Activated T-helper 1 cell treated with anti-CD3 and anti-CD28 coated beads, Interleukin-12 subunit alpha, Interleukin-12 subunit beta, Interleukin-2, Interleukin-4 antibody, amounts not matched to agents 30 ng/mL and 10 ng/mL and 1 ng/mL, durations not matched to agents 14 hours and 24 hours and 36 hours (primary cell): ENCODE measurements at regions of chr2 and their contacts with region 1.

Region 1: DNA sequence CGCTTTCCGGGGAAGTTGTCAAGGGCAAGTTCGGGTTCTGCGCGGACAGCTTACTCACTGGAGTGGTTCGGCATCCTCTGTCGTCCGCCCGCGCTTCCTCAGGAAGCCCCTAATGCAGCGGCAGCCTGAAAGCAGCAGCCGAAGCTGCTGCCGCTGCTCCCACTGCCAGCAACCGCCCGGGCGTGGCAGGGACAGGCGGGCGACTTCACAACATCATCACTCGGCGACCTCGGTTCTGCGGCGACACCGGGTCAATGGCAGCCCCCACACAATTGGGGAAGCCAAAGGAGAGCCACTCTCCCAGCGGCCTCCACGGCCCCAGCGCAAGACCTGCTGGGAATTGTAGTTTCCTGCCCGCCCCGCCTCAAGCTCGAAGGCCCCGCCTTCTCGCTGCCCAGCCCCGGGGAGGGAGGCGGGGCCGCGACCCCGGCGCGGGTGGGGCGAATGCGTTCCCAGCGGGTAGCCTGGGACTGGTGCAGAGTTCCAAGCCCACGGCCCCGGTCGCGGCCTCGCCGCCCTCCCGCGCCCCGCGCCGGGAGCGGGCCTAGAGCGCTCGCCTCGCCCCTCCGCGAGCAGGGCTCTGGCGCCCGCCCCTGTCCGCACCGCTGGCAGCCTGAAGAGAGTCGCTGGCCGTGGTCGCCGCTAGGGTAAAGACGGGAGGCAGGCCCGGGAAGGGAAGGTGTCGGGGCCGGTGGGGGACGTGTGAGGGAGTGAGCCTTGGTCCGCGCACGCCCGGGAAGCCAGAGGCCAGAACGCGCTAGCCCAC is at the starts of genes STRADB and TRAK2:
- DNase-seq: peak; percentile 94
- H3K4me3 Mint-ChIP-seq: peak within 1 kb of the TSS; percentile 94
- H3K27ac Mint-ChIP-seq: peak within 1 kb of the TSS; percentile 93
- H3K4me1 Mint-ChIP-seq: peaks cover 43% of the 10 kb centered on the region
- H3K27me3 Mint-ChIP-seq: peaks cover 12% of the 10 kb centered on the region
- total RNA-seq, gene STRADB: 14.6 and 18.1 TPM in 2 replicates
- total RNA-seq, gene TRAK2: 24.7 and 28.9 TPM in 2 replicates

Region 2: GRCh38 chr2:200888704-200889625 is 562.5 kb before region 1 on chr2 and contains the starts of genes NIF3L1 and PPIL3:
- intact Hi-C with region 1: loop called (anchors 1 kb)
- DNase-seq: peak; percentile 96
- H3K4me3 Mint-ChIP-seq: peak within 1 kb of the TSS; percentile 97
- H3K27ac Mint-ChIP-seq: peak within 1 kb of the TSS; percentile 99
- H3K4me1 Mint-ChIP-seq: peaks cover 54% of the 10 kb centered on the region
- H3K27me3 Mint-ChIP-seq: no peaks in the 10 kb centered on the region
- total RNA-seq, gene NIF3L1: 26.6 and 27.3 TPM in 2 replicates
- total RNA-seq, gene PPIL3: 44.2 TPM in 2 replicates

Region 3: DNA sequence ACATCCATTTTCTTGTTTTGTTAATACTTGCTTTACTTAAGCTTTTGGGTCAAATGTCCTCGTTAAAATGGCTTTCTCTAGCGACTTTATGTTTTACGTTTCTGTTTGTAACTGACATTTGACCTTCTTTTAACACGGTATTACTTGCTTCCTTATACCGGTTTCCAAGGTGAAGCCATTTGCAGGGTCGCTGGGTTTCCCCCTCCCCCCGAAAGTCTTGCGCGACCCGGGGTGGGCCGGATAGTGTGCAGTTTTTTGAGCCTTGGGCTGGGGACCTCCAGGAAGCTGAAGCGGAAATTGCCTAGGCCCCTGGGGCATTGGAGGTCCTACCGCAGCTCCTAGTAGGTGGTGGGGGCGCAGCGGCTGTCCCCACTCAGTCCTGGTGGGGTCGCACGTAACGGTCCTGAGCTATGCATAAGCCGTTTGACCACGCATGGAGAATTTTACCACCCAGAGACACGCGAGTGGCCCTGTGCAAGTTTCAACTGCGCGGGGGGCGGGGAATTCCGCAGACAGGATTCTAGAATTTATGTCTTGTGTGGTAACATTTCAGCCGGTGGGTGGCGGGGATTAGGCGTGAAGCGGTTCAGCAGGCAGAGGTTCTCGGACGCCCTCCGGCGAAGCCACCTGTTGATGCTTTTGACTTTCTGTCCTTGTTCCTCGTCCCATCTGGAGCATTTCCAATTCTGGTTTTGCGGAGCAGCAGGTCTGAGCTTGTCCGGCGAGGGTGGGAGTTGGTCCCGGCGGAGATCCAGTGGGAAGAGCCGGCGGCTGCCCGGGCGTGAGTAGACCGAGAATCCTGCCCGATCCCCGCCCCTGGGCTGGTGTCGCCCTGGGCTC is 333.1 kb before region 1 on chr2:
- intact Hi-C with region 1: loop called (anchors 5 kb)
- DNase-seq: peak; percentile 78
- H3K4me3 Mint-ChIP-seq: peak overlapping the region; percentile 94
- H3K27ac Mint-ChIP-seq: peak overlapping the region; percentile 100
- H3K4me1 Mint-ChIP-seq: peaks cover 65% of the 10 kb centered on the region
- H3K27me3 Mint-ChIP-seq: no peaks in the 10 kb centered on the region

Region 4: DNA sequence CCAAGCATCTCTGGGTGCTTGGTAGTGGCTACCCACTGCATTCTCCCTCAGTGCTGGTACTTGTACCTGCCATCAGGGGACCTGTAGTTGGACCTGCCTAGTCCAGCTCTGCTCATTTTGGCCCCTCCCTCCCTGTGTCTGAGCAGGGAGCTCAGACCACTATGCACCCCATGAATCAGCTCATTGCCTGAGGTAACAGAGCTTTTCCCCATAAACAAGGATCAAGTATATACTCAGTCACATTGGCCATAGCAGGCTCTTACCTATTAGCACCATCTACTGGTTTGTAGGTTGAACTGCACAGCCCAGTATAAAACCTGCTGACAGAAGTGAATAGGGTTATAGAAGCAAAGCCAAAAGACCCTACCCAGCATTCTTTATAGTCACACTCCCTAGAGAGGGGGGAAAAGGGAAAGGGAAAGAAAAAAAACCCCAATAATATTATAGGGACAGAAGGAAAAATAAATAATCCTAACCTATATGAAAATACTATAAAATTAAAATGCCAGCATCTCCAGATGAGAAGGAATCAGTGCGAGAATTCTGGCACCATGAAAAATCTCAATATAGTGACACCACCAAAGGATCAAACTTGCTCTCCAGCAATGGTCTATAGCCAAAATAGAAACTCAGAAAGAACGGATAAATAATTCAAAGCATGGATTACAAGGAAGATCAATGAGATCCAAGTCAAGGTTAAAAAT is 87.5 kb before region 1 on chr2:
- intact Hi-C with region 1: loop called (anchors 2 kb)
- DNase-seq: peak; percentile 30
- H3K4me3 Mint-ChIP-seq: no peak overlapping the region
- H3K27ac Mint-ChIP-seq: no peak overlapping the region
- H3K4me1 Mint-ChIP-seq: peaks cover 45% of the 10 kb centered on the region
- H3K27me3 Mint-ChIP-seq: no peaks in the 10 kb centered on the region

Region 5: DNA sequence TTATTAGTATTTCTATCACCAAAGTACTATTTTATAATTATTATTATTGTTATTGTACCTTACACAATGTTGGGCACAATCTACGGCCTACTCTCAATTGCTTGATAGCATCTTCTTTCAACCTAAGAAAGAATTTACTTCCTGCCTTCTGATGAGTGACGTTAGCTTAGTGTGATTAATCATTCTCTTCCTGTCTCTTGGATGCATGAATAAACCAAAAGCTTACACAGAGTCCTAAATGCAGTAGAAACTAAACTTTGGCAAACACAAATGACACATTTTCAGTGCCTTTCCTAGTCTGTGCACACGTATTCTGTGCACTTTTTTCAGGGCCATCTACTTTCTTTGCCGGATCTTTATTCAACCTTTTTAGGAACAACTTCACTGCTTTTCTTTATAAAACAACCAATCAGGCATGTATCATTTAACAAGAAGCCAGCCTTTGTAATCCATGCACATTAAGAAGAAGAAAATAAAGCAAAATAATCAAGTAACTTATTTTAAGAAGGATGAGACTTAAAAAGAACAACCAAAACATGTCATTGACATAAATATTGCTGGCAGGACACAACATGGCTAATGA is 19.3 kb before region 1 on chr2:
- intact Hi-C with region 1: loop called (anchors 1 kb)
- DNase-seq: no peak
- H3K4me3 Mint-ChIP-seq: peak overlapping the region; percentile 57
- H3K27ac Mint-ChIP-seq: peak overlapping the region; percentile 85
- H3K4me1 Mint-ChIP-seq: peaks cover 35% of the 10 kb centered on the region
- H3K27me3 Mint-ChIP-seq: no peaks in the 10 kb centered on the region

Region 6: GRCh38 chr2:202033321-202034248 is 582.1 kb after region 1 on chr2 and contains the start of gene FZD7:
- intact Hi-C with region 1: loop called (anchors 5 kb)
- DNase-seq: peak; percentile 83
- H3K4me3 Mint-ChIP-seq: peak within 1 kb of the TSS; percentile 89
- H3K27ac Mint-ChIP-seq: peak within 1 kb of the TSS; percentile 63
- H3K4me1 Mint-ChIP-seq: peaks cover 12% of the 10 kb centered on the region
- H3K27me3 Mint-ChIP-seq: peaks cover 44% of the 10 kb centered on the region
- total RNA-seq, gene FZD7: 1.2 and 1.5 TPM in 2 replicates